ENCODE measurements at regions of chr12 and their contacts with region 1.

Region 1: GRCh38 chr12:107093417-107094182 is at the start of gene CRY1:
- DNase-seq: peak; percentile 98
- H3K4me3 Mint-ChIP-seq: no peak within 1 kb of the TSS
- H3K27ac Mint-ChIP-seq: no peak within 1 kb of the TSS
- H3K4me1 Mint-ChIP-seq: peaks cover 4% of the 10 kb centered on the region
- H3K27me3 Mint-ChIP-seq: peaks cover 12% of the 10 kb centered on the region
- total RNA-seq, gene CRY1: 23.8 and 26.0 TPM in 2 replicates

Region 2: DNA sequence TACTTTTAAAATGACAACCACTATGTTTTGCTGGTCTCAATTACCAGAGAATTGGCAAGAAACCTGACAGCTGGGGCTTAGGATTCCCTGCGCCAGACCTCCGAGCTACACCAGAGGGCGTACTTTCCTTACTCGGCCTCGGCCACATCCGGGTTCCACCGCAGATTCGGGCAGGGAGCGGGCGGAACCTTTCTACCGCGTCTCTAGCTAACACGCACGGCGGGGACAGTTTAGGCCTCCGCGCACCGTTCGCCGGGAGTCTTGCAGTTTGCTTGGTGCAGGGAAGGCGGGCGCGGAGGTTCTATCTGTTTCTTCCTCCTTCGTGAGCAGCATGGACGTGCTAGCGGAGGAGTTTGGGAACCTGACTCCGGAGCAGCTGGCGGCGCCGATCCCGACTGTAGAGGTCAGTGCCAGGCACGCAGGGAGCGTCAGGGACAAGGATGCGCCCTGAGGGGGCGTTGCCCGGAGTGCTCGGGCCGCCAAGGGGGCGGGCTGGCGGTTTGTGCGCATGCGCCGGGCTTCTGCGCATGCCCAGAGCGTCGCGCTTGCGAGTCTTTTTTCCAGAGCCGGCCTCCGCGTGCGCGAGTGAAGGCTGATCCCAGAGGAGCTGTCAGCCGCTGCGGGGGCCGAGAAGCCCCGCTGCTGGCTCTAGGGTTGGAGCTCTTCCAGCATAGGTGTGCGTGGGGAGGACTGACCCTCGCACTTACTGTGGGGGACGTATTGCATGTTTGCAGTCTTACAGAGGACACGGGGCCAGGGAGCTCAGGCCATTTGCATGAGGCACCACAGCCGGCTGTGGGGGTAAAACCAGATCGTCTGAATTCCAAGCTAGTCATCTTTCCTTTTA is 735.8 kb before region 1 on chr12 and contains the start of gene POLR3B:
- intact Hi-C with region 1: loop called (anchors 5 kb)
- DNase-seq: peak; percentile 98
- H3K4me3 Mint-ChIP-seq: peak within 1 kb of the TSS; percentile 92
- H3K27ac Mint-ChIP-seq: peak within 1 kb of the TSS; percentile 96
- H3K4me1 Mint-ChIP-seq: peaks cover 17% of the 10 kb centered on the region
- H3K27me3 Mint-ChIP-seq: no peaks in the 10 kb centered on the region
- total RNA-seq, gene POLR3B: 12.1 and 13.1 TPM in 2 replicates

Region 3: DNA sequence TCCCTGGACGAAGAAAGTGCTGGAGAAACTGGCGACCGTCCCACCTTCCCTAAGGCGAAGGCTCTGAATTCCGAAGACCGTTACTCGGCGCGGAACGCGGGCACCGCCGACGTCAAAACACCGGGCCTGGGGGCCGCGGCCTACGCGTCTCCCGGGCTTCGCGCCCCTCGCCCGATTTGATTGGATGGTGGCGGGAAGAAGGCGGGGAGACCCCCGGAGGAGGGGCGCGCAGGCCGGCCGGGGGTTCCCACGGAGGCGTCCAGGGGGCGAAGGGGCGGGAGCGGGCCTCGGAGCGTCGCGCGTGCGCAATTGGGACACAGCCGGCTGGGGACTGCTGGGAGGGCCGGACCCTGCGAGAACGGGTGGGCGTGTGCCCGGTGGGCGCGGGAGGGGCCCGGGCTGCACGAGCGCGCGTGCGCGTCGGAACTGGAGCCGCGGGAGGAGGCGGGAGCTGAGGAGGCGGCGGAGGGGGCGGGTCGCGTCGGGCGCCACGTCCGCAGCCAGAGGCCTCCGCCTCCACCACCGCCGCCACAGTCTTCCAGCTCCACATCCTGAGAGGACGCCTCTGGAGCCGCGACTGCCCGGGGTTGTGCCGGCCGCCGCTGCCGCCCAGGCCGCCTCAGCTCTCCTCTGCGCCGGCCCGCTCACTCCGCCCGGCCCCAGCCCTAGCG is 138.1 kb before region 1 on chr12 and contains the start of gene TMEM263:
- intact Hi-C with region 1: loop called (anchors 1 kb)
- DNase-seq: peak; percentile 97
- H3K4me3 Mint-ChIP-seq: peak within 1 kb of the TSS; percentile 97
- H3K27ac Mint-ChIP-seq: peak within 1 kb of the TSS; percentile 97
- H3K4me1 Mint-ChIP-seq: peaks cover 24% of the 10 kb centered on the region
- H3K27me3 Mint-ChIP-seq: peaks cover 13% of the 10 kb centered on the region
- total RNA-seq, gene TMEM263: 24.8 and 26.6 TPM in 2 replicates

Region 4: DNA sequence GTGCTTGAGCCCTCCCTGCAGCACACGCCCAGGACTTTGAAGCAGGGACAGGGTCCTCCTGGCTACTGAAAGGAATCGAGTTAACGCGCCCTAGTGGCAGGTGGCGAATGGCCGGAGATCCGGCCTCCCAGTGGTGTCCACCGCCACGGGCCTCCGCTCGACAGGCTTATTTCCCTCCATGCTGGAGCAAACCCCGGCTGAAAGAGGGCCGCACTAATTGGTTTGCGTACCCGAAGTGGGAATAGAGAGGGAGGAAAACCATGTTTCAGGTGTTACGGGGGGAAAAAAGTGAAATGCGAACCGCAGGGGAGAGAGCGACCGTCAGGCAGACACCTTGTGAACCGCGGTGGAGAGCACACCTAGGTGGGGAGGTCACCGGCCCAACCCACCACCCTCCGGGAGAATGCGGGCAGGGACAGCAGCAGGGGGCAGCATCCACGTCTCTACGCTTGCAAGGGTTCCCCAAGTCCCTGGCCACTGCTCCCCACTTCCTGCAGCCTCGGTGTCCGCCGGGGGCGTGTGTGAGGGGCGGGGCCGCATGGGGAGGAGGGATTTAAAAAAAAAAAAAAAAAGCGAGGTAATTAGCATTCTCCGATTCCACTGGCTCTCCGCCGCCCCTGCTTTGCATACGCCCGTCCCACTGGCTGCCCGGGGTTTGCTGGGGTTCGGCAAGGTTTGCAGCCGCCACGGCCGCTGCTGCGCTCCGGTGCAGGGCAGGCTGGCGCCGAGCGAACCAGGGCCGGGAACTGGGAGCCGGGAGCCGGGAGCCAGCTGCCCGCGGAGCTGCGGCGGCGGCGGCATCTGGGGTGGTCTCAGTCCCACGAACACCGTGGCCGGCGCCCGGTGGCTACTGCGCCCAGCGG is 224.4 kb after region 1 on chr12:
- intact Hi-C with region 1: loop called (anchors 1 kb)
- DNase-seq: peak; percentile 97
- H3K4me3 Mint-ChIP-seq: peak overlapping the region; percentile 88
- H3K27ac Mint-ChIP-seq: peak overlapping the region; percentile 50
- H3K4me1 Mint-ChIP-seq: peaks cover 26% of the 10 kb centered on the region
- H3K27me3 Mint-ChIP-seq: peaks cover 28% of the 10 kb centered on the region

Region 5: DNA sequence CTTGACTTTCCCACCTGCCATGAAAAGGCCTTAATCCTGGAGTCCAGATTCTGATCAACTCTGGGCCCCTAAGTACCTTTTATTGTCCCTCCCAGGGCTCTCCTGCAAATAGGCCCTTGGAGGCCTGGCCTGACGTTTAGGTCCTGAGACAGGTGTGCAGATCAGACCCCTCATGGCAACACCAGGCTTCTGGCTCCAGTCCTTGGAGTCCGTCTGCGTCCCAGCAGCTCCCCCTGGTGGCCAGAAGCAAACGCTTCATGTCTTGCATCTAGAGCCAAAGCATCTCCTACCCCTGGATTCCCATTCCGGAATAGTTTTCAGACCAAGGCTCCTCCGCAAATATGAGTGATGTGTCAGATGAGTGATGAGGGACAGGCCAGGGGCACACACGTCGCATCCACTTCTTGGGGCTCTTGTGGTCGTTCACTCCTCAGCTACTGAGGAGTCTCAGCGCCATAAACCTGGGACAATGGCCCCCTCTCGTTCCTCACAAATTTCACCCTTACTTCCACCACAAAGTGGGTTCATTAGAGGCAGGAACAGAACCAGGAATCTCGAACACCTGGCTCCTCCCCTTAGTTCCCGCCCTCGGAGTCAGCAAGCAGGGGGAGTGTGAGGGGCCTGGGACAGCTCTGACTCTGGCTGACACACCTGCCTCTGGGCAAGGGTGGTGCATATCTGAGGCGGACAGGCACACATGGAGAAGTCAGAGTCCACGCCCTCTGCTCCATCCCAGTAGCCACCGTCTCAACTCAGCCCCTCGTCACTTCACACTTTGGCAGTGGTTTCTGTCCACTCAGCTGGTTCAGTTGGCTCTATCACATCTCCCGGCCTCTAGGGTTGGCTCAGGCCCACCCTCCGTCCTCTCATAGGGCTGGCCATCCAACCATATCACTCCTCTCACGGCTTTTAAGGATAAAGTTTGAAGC is 514.1 kb after region 1 on chr12:
- intact Hi-C with region 1: loop called (anchors 1 kb)
- DNase-seq: peak; percentile 93
- H3K4me3 Mint-ChIP-seq: no peak overlapping the region
- H3K27ac Mint-ChIP-seq: no peak overlapping the region
- H3K4me1 Mint-ChIP-seq: peaks cover 3% of the 10 kb centered on the region
- H3K27me3 Mint-ChIP-seq: no peaks in the 10 kb centered on the region

Region 6: GRCh38 chr12:107760809-107761501 is 667.4 kb after region 1 on chr12 and contains the start of gene PRDM4:
- intact Hi-C with region 1: loop called (anchors 1 kb)
- DNase-seq: peak; percentile 98
- H3K4me3 Mint-ChIP-seq: peak within 1 kb of the TSS; percentile 93
- H3K27ac Mint-ChIP-seq: peak within 1 kb of the TSS; percentile 88
- H3K4me1 Mint-ChIP-seq: peaks cover 26% of the 10 kb centered on the region
- H3K27me3 Mint-ChIP-seq: peaks cover 7% of the 10 kb centered on the region
- total RNA-seq, gene PRDM4: 30.2 and 31.1 TPM in 2 replicates

Measured in activated CD4-positive, alpha-beta T cell treated with anti-CD3 and anti-CD28 coated beads, Interleukin-2, amount 10 ng/mL, durations not matched to agents 24 days and 14 days (primary cell).